ENCODE measurements at regions of chr15 and their contacts with region 1.

Region 1: DNA sequence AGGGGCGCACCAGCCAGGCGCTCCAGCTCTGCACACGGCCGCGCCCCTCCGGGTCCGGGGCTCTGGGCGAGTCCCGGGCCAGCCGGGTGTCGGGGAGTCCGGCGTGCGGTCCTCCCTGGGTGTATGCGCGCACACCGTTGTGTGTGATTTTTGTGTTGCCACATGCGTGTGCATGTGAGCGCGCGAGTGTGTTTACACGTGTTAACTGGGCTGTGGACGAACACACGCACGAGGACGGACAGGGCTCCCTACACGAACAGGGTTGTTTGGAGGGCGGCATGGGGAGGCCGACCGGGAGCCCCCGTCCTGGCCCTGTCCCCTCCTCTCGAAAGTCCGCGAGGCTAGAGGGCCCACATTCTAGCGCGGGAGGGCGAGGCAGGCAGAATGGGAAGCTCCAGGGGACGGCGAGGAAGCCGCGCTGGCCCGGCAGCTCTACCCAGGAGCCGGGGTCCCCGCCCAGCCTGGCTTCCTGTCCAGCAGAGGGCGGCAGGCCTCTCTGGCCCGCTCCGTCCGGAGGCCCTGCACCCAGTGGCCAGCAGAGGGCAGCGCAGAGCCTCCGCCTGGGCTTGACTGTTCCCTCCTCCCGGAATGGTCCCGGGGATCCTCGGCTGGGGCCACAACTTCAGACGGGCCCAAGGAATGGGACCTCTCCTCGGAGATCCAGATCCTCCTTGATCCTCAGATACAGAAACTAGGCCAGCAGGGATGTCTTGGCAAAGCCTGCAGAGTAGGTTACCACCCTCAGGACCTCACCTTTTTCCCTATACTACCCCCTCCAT is 611 bp upstream of the LINGO1 start:
- DNase-seq: peak; percentile 52
- H3K4me3 ChIP-seq: peak overlapping the region; percentile 54
- H3K27ac ChIP-seq: no peak overlapping the region
- H3K27me3 ChIP-seq: peaks cover 79% of the 10 kb centered on the region
- CTCF ChIP-seq: peak; percentile 100

Region 2: GRCh38 chr15:77118882-77119321 is 514.4 kb before region 1 on chr15:
- CTCF ChIA-PET with region 1: interaction called, 16 read pairs
- POLR2A ChIA-PET with region 1: no interaction called
- DNase-seq: peak; percentile 54
- H3K4me3 ChIP-seq: no peak overlapping the region
- H3K27ac ChIP-seq: no peak overlapping the region
- H3K27me3 ChIP-seq: no peaks in the 10 kb centered on the region
- CTCF ChIP-seq: peak; percentile 82

Region 3: GRCh38 chr15:77607111-77607893 is 26.0 kb before region 1 on chr15:
- CTCF ChIA-PET with region 1: interaction called, 11 read pairs
- POLR2A ChIA-PET with region 1: no interaction called
- DNase-seq: no peak
- H3K4me3 ChIP-seq: no peak overlapping the region
- H3K27ac ChIP-seq: no peak overlapping the region
- H3K27me3 ChIP-seq: peaks cover 12% of the 10 kb centered on the region
- CTCF ChIP-seq: no peak

Region 4: DNA sequence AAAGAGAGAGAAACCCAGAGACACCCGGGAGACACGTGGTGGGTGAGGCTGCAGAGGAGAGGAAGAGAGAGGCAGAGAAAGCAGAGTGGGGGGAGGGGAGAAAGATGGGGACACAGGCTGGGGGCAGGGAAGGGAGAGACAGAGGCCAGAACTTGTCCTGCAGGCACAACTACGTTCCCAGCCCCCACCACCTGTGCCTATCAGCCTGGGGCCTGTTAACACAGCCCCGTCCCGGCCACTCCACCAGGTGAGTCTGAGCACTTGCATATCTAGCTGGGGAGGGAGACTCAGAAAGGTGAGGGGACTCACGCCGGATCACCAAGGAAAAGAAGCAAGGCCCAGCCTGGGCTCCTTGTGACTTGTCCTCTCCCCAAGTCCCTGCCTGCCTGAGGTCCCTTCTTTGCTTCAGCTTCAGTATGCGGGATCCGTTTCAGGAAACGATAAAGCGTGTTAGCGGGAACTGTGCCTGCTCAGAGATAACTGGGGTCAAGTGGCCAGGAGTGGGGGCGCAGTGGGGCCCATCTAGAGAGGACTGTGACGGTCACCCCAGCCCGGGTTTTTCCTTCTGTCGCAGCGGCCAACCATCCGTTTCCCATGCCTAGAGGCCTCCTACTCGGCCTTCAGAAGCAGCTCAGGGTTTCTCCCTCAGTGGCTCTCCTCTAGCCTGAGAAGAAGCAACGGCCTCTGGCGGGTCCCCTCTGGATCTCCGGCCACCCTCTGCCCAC is 11.0 kb before region 1 on chr15:
- CTCF ChIA-PET with region 1: interaction called, 25 read pairs
- POLR2A ChIA-PET with region 1: no interaction called
- DNase-seq: no peak
- H3K4me3 ChIP-seq: no peak overlapping the region
- H3K27ac ChIP-seq: no peak overlapping the region
- H3K27me3 ChIP-seq: peaks cover 40% of the 10 kb centered on the region
- CTCF ChIP-seq: no peak

Region 5: GRCh38 chr15:77650265-77650664 is 16.9 kb after region 1 on chr15:
- CTCF ChIA-PET with region 1: interaction called, 22 read pairs
- POLR2A ChIA-PET with region 1: no interaction called
- DNase-seq: no peak
- H3K4me3 ChIP-seq: no peak overlapping the region
- H3K27ac ChIP-seq: no peak overlapping the region
- H3K27me3 ChIP-seq: peaks cover 29% of the 10 kb centered on the region
- CTCF ChIP-seq: peak; percentile 24; the same call in 1 of the 2 replicates

Region 6: GRCh38 chr15:77821188-77821958 is 188.1 kb after region 1 on chr15:
- CTCF ChIA-PET with region 1: interaction called, 51 read pairs
- POLR2A ChIA-PET with region 1: no interaction called
- DNase-seq: peak; percentile 18
- H3K4me3 ChIP-seq: no peak overlapping the region
- H3K27ac ChIP-seq: no peak overlapping the region
- H3K27me3 ChIP-seq: peaks cover 52% of the 10 kb centered on the region
- CTCF ChIP-seq: peak; percentile 86

Measured in AG04450 (cell line).